Activated CD4-positive, alpha-beta T cell treated with anti-CD3 and anti-CD28 coated beads for 36 hours (primary cell): ENCODE measurements at regions of chr19 and their contacts with region 1.

Region 1: GRCh38 chr19:58305065-58305931 is at the start of gene ERVK3-1:
- DNase-seq: peak; percentile 97
- ATAC-seq: peak; percentile 98
- H3K4me3 Mint-ChIP-seq: peak within 1 kb of the TSS; percentile 99
- H3K27ac Mint-ChIP-seq: peak within 1 kb of the TSS; percentile 100
- H3K4me1 Mint-ChIP-seq: peaks cover 52% of the 10 kb centered on the region
- H3K27me3 Mint-ChIP-seq: no peaks in the 10 kb centered on the region
- total RNA-seq, gene ERVK3-1: 38.6 to 53.6 TPM

Region 2: GRCh38 chr19:58326914-58327726 is 21.8 kb after region 1 on chr19 and contains the start of gene ZSCAN22:
- CTCF ChIA-PET with region 1: interaction called, 4 read pairs
- POLR2A ChIA-PET with region 1: no interaction called
- intact Hi-C with region 1: loop called (anchors 1 kb)
- DNase-seq: peak; percentile 96
- ATAC-seq: peak; percentile 91
- H3K4me3 Mint-ChIP-seq: no peak within 1 kb of the TSS
- H3K27ac Mint-ChIP-seq: no peak within 1 kb of the TSS
- H3K4me1 Mint-ChIP-seq: peaks cover 4% of the 10 kb centered on the region
- H3K27me3 Mint-ChIP-seq: no peaks in the 10 kb centered on the region
- total RNA-seq, gene ZSCAN22: 3.1 to 3.8 TPM

Region 3: DNA sequence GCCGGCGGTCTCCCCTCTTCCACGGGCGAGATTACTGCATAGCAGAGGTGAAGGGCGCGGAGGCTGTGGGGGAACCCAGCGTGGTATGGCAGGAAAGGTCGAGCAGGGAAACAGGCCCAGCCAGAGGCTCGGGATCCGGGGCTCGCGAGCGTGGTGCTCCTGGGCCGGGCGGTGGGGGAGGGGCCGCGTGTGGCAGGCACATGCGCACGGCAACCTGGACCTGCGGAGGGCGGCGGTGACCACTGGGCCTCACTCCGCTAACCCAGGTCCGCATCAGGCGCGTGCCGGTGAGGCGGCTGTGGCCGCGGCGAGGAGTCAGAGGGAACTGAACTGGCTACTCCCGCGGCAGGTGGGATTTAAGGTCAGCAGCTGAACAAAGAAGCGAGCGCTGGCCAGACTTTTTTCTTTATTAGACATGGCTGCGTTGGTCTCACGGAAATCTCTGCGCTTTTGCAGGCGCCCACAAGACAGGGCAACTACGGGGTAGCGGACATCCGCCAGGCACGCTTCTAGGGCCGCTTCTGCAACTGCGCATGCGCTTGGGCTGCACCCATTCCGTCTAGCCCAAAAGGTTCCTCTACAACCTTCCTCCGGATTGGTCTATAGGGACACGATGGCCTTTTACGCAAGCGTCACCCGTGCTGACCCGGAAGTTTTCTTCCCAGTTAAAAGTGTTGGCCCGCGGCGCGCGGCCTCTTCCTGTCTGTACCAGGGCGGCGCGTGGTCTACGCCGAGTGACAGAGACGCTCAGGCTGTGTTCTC is 81.5 kb after region 1 on chr19 and contains the start of gene RPS5:
- CTCF ChIA-PET with region 1: no interaction called
- POLR2A ChIA-PET with region 1: no interaction called
- intact Hi-C with region 1: loop called (anchors 1 to 5 kb)
- DNase-seq: peak; percentile 97
- ATAC-seq: peak; percentile 96
- H3K4me3 Mint-ChIP-seq: peak within 1 kb of the TSS; percentile 96
- H3K27ac Mint-ChIP-seq: peak within 1 kb of the TSS; percentile 97
- H3K4me1 Mint-ChIP-seq: peaks cover 33% of the 10 kb centered on the region
- H3K27me3 Mint-ChIP-seq: no peaks in the 10 kb centered on the region
- total RNA-seq, gene RPS5: 1,234 to 1,535 TPM

Region 4: DNA sequence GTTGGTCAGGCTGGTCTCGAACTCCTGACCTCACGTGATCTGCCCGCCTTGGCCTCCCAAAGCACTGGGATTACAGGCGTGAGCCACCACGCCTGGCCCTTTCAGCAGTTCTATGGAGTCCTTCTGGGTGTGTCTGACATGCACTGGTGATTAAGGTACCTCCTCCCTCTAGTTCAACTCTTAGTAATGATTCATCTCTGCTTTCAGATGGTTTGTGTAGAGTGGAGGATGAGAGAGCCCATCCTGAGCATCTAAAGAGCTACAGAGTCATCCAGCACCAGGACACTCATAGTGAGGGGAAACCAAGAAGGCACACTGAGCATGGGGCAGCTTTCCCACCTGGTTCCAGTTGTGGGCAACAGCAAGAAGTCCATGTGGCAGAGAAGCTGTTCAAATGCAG is 111.3 kb after region 1 on chr19:
- CTCF ChIA-PET with region 1: no interaction called
- POLR2A ChIA-PET with region 1: no interaction called
- intact Hi-C with region 1: no loop called
- DNase-seq: no peak
- ATAC-seq: no peak
- H3K4me3 Mint-ChIP-seq: no peak overlapping the region
- H3K27ac Mint-ChIP-seq: no peak overlapping the region
- H3K4me1 Mint-ChIP-seq: no peaks in the 10 kb centered on the region
- H3K27me3 Mint-ChIP-seq: no peaks in the 10 kb centered on the region

Region 5: GRCh38 chr19:58451358-58452101 is 146.2 kb after region 1 on chr19 and contains the start of gene ZNF324B:
- CTCF ChIA-PET with region 1: no interaction called
- POLR2A ChIA-PET with region 1: no interaction called
- intact Hi-C with region 1: loop called in 1 of 2 experiments (anchors 1 kb)
- DNase-seq: peak; percentile 98
- ATAC-seq: peak; percentile 99
- H3K4me3 Mint-ChIP-seq: peak within 1 kb of the TSS; percentile 77
- H3K27ac Mint-ChIP-seq: peak within 1 kb of the TSS; percentile 55
- H3K4me1 Mint-ChIP-seq: peaks cover 25% of the 10 kb centered on the region
- H3K27me3 Mint-ChIP-seq: peaks cover 15% of the 10 kb centered on the region
- total RNA-seq, gene ZNF324B: 5.8 to 7.5 TPM

Region 6: GRCh38 chr19:58475714-58476497 is 170.6 kb after region 1 on chr19 and contains the start of gene ZNF446:
- CTCF ChIA-PET with region 1: interaction called, 4 read pairs
- POLR2A ChIA-PET with region 1: no interaction called
- intact Hi-C with region 1: loop called in 1 of 2 experiments (anchors 1 kb)
- DNase-seq: peak; percentile 98
- ATAC-seq: peak; percentile 92
- H3K4me3 Mint-ChIP-seq: peak within 1 kb of the TSS; percentile 83
- H3K27ac Mint-ChIP-seq: peak within 1 kb of the TSS; percentile 96
- H3K4me1 Mint-ChIP-seq: peaks cover 14% of the 10 kb centered on the region
- H3K27me3 Mint-ChIP-seq: no peaks in the 10 kb centered on the region
- total RNA-seq, gene ZNF446: 4.2 to 4.7 TPM

Region 7: GRCh38 chr19:58543826-58544590 is 238.7 kb after region 1 on chr19 and contains the start of gene TRIM28:
- CTCF ChIA-PET with region 1: no interaction called
- POLR2A ChIA-PET with region 1: no interaction called
- intact Hi-C with region 1: loop called in 1 of 2 experiments (anchors 1 kb)
- DNase-seq: peak; percentile 100
- ATAC-seq: peak; percentile 98
- H3K4me3 Mint-ChIP-seq: peak within 1 kb of the TSS; percentile 96
- H3K27ac Mint-ChIP-seq: peak within 1 kb of the TSS; percentile 97
- H3K4me1 Mint-ChIP-seq: peaks cover 34% of the 10 kb centered on the region
- H3K27me3 Mint-ChIP-seq: peaks cover 4% of the 10 kb centered on the region
- total RNA-seq, gene TRIM28: 481 to 758 TPM